GM13976 (cell line): ENCODE measurements at regions of chr6 and their contacts with region 1.

Region 1: GRCh38 chr6:163956571-163957407 is 542.3 kb downstream of the QKI start:
- DNase-seq: peak; percentile 84
- CTCF ChIP-seq: peak; percentile 73

Region 2: DNA sequence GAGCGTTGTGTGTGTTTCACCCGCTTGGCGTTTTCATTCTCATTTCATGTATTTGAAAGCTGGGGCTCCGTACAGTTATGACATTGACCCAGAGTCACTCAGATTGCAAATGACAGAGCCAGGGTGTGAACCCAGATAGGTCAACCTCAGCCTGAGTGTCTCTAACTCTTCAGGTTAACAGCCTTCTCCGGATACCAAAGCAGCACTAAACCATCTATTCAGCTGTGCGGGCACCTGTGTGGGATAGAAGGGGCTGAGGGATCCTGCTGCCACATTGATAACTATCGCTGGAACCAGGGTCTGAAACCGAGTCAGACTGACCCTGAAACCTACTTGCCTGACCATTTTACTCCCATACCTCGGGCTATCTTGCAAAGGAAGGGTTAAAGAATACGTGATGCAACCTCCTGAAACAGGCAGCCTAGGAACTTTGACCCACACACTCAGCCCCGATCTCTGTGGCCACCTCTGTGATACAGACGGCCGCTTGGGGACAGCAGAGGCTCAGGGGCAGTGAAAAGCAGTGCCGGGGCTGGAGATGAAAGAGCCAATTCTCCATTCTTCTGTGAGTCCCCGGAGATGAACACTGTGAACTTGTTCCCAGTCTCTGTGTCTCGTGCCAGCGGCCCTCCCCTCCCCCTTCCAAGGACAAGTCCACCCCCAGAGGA is 775.8 kb before region 1 on chr6:
- in situ Hi-C with region 1: loop called (anchors 25 kb)
- DNase-seq: peak; percentile 39
- CTCF ChIP-seq: peak; percentile 28

Region 3: DNA sequence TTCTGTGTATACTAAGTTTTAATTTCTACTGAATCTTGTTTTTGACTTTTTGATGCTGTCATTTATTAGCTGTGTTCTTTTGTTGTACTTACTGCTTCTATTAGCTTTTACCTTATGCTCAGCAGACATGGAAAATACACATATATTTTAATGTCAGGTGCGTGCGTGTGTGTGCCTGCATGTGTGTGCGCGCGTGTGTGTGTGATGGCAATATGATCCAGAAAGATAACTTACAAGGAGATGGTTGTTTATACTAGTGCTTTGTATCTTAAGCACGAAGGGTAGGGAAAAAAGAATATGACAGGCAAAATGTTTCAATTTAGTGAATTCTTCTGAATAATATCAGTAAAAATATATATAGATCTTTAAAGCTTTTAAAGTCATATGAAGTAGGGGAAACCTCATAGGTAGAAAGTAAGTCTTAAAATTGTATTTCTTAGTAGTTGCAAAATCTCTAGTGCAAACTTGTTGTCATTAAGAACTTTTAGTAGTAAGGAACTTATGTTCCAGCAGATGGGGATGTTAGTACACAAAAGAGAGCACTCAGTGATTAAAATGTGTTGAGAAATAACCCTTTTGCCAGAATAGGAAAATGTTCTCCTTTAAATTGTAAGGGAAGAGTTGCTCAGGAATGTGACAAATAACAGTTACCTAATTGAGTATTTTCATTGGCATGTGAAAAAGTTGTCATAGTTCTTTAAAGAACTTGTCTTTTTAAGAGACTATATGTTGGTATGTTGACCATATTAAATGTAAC is 529.1 kb before region 1 on chr6:
- in situ Hi-C with region 1: loop called (anchors 10 kb)
- DNase-seq: no peak
- CTCF ChIP-seq: peak; percentile 9

Region 4: GRCh38 chr6:163725008-163725941 is 231.5 kb before region 1 on chr6:
- in situ Hi-C with region 1: loop called (anchors 10 kb)
- DNase-seq: no peak
- CTCF ChIP-seq: no peak